SK-N-SH (cell line): ENCODE measurements at regions of chr17 and their contacts with region 1.

Region 1: GRCh38 chr17:63611354-63611753 is 10.7 kb downstream of the TACO1 start:
- DNase-seq: no peak
- H3K4me3 ChIP-seq: no peak overlapping the region
- H3K27ac ChIP-seq: peak overlapping the region; percentile 6 to 11; a peak in 2 of 4 replicates
- H3K4me1 ChIP-seq: no peaks in the 10 kb centered on the region
- H3K27me3 ChIP-seq: no peaks in the 10 kb centered on the region
- CTCF ChIP-seq: no peak
- EP300 ChIP-seq: no peak
- RAD21 ChIP-seq: no peak

Region 2: GRCh38 chr17:63434876-63435684 is 176.3 kb before region 1 on chr17:
- CTCF ChIA-PET with region 1: interaction called, 827 read pairs
- POLR2A ChIA-PET with region 1: interaction called, 10 read pairs
- DNase-seq: peak; percentile 69
- H3K4me3 ChIP-seq: no peak overlapping the region
- H3K27ac ChIP-seq: peak overlapping the region; percentile 97
- H3K4me1 ChIP-seq: peaks cover 48 to 94% of the 10 kb centered on the region in 2 experiments
- H3K27me3 ChIP-seq: no peaks in the 10 kb centered on the region
- CTCF ChIP-seq: peak; percentile 62
- EP300 ChIP-seq: peak in 1 of 2 experiments; percentile 73; a peak in 2 of 4 replicates
- RAD21 ChIP-seq: peak; percentile 25

Region 3: DNA sequence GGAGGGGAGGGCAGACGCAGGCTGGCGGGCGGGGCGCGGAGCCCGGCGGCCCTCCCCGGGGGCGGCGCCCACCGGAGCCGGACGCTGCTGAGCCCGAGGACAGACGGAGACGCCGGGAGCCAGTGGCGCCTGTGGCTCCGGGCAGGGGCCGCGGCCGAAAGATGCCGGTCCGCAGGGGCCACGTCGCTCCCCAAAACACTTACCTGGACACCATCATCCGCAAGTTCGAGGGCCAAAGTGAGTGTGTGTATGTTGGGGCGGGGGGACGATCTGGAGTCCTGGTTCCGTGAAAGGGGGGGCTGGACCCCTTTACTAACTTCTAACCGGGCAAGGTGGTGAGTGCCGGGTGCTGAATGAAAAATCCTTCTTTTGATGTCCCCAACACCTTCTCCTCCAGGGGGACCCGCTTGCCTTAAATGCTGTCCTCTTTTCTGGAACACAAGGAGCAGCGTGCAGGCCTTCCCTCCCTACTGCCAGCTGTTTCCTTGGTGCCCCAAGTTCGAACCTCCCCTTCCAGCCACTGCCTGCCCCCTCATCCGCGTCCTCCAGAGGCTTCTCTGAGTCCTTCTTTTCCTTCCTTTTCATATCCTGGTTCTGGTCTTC is 88.0 kb before region 1 on chr17 and contains the start of gene KCNH6:
- CTCF ChIA-PET with region 1: interaction called, 29 read pairs
- POLR2A ChIA-PET with region 1: no interaction called
- DNase-seq: peak; percentile 75
- H3K4me3 ChIP-seq: peak within 1 kb of the TSS; percentile 43 to 53
- H3K27ac ChIP-seq: no peak within 1 kb of the TSS; a peak in 1 of 4 replicates
- H3K4me1 ChIP-seq: peaks cover 0 to 55% of the 10 kb centered on the region in 2 experiments; a peak in 1 of 4 replicates
- H3K27me3 ChIP-seq: 0 out of 2 replicates have a peak, but pooled peaks cover 17% of the 10 kb centered on the region
- CTCF ChIP-seq: 0 out of 2 replicates have a peak, but pooled peaks have one; percentile 9
- EP300 ChIP-seq: no peak
- RAD21 ChIP-seq: peak; percentile 11; the same call in 1 of the 2 replicates
- polyA plus RNA-seq, gene KCNH6: 0.15 and 0.18 TPM in 2 replicates

Region 4: GRCh38 chr17:63579540-63580001 is 31.8 kb before region 1 on chr17:
- CTCF ChIA-PET with region 1: interaction called, 19 read pairs
- POLR2A ChIA-PET with region 1: no interaction called
- DNase-seq: no peak
- H3K4me3 ChIP-seq: no peak overlapping the region
- H3K27ac ChIP-seq: no peak overlapping the region
- H3K4me1 ChIP-seq: no peaks in the 10 kb centered on the region; a peak in 1 of 4 replicates
- H3K27me3 ChIP-seq: no peaks in the 10 kb centered on the region
- CTCF ChIP-seq: no peak
- EP300 ChIP-seq: no peak
- RAD21 ChIP-seq: no peak

Region 5: GRCh38 chr17:63621766-63622519 is 10.6 kb after region 1 on chr17 and contains the start of gene MAP3K3:
- CTCF ChIA-PET with region 1: interaction called, 120 read pairs
- POLR2A ChIA-PET with region 1: interaction called, 16 read pairs
- DNase-seq: peak; percentile 99
- H3K4me3 ChIP-seq: peak within 1 kb of the TSS; percentile 79 to 87
- H3K27ac ChIP-seq: peak within 1 kb of the TSS; percentile 42 to 88; a peak in 3 of 4 replicates
- H3K4me1 ChIP-seq: peaks cover 13 to 14% of the 10 kb centered on the region in 2 experiments; a peak in 2 of 4 replicates
- H3K27me3 ChIP-seq: no peaks in the 10 kb centered on the region
- CTCF ChIP-seq: no peak; the same call in 1 of the 2 replicates
- EP300 ChIP-seq: peak in 1 of 2 experiments; percentile 29; a peak in 2 of 4 replicates
- RAD21 ChIP-seq: 0 out of 2 replicates have a peak, but pooled peaks have one; percentile 2
- polyA plus RNA-seq, gene MAP3K3: 25.3 and 26.5 TPM in 2 replicates

Region 6: GRCh38 chr17:63834431-63835166 is 223.2 kb after region 1 on chr17:
- CTCF ChIA-PET with region 1: interaction called, 10 read pairs
- POLR2A ChIA-PET with region 1: no interaction called
- DNase-seq: peak; percentile 87
- H3K4me3 ChIP-seq: no peak overlapping the region
- H3K27ac ChIP-seq: peak overlapping the region; percentile 12 to 71; a peak in 3 of 4 replicates
- H3K4me1 ChIP-seq: peaks cover 11 to 29% of the 10 kb centered on the region in 2 experiments
- H3K27me3 ChIP-seq: no peaks in the 10 kb centered on the region
- CTCF ChIP-seq: peak; percentile 95
- EP300 ChIP-seq: peak in 1 of 2 experiments; percentile 15; a peak in 1 of 4 replicates
- RAD21 ChIP-seq: peak; percentile 77

Region 7: DNA sequence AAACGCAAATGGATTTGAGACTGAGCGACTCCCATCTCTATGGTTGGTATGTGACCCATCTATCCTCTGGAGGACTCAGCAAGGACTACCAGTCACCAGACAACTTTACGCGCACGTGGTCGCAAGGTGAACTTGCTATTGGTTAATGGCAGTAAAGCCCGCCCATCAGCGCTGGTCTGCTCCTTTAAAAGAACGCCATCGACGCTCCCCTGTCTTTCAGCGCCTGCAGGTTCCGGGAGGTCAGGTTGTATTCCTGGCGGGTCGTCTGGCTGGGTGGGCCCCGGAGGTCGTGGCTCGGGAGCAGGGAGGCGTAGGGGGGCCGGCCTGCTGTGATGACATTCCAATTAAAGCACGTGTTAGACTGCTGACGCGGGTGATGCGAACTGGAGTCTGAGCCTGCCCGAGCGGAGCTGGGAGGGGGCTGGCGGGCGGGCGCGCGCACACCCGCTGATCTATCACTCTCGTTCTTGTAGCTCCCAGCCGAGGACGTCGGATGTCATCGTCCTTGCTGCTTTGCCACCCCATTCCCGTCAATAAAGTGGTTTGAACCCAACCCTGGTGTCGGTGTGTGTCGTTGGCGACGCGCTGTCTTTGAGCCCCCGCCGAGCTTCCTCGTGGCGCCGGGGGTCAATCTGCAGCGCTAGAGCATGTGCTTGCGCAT is 534.5 kb after region 1 on chr17:
- CTCF ChIA-PET with region 1: no interaction called
- POLR2A ChIA-PET with region 1: no interaction called
- DNase-seq: peak; percentile 96
- H3K4me3 ChIP-seq: peak overlapping the region; percentile 73 to 80
- H3K27ac ChIP-seq: peak overlapping the region; percentile 65 to 97
- H3K4me1 ChIP-seq: peaks cover 11 to 28% of the 10 kb centered on the region in 2 experiments
- H3K27me3 ChIP-seq: no peaks in the 10 kb centered on the region
- CTCF ChIP-seq: no peak; the same call in 1 of the 2 replicates
- EP300 ChIP-seq: no peak
- RAD21 ChIP-seq: no peak